Heart right ventricle (tissue), 16 donors: ENCODE measurements at regions of chr3 and their contacts with region 1.

Region 1: DNA sequence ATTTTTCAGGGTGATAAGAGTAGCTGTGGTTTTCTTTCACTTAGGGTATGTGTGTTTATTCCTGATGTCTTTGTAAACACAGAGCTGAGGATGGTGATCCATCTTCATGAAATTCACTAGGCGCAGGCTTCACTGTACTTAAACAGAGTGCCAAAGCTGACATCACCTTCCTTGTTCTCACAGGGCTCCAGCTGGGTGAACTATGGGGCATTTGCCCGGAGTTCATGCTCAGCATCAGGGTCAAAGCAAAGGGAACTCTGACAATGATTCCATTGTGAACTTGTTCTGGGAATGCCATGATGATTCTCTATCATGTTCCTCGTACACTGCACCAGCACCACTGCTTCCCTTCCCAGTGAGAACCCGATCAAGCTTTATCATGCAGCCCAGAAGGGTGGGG is 184.8 kb upstream of the P2RY1 start:
- DNase-seq: no peak
- ATAC-seq: peak in 3 of 8 donors; percentile 16 to 57 (median 55)
- H3K4me3 ChIP-seq: no peak overlapping the region
- H3K27ac ChIP-seq: no peak overlapping the region
- H3K4me1 ChIP-seq: peaks cover 0 to 7% (median 0%) of the 10 kb centered on the region in 9 donors
- H3K27me3 ChIP-seq: no peaks in the 10 kb centered on the region
- CTCF ChIP-seq: no peak

Region 2: DNA sequence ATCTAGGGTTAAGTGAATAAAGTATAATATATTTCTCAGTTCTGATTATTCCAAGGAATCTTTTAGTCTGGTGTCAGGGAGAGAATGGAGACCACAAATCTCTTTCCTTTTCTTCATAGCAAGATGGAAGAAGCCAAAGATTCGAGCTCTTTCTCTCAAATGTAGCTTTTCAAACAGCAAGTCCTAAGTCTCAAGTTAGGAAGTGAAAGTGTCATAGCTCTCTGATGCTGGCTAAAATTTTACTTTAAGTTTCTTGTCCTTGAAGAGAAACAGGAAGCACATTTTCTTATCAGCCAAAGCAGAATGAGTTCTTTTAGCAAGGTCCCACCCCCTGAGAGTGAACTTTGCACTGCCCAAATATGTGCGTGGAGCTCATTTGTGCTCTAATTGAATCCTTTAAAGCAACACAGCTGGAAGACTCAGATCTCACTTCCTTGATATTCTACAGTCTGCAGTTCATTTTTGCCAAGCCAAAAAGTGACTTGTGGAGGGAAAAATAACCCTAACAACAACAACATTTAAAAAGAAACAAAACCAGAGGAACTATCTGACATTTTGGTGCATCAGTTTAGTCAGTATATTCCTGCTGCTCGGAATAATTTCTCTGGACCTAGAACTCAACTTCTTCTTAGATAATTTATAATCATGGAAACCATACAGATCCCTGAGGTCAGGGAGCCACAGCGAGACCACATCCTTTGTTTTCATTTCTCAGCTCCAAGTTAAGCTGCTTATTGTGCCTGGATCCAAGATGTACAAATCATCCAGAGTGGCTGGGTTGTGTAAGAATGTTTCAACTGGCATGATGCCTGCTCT is 54.0 kb before region 1 on chr3:
- intact Hi-C with region 1: loop called in 1 of 10 experiments (anchors 2 kb)
- DNase-seq: peak in 1 of 2 donors; percentile 71
- ATAC-seq: peak; percentile 77 to 98 (median 96)
- H3K4me3 ChIP-seq: peak overlapping the region in 4 of 10 donors; percentile 0 to 31 (median 6)
- H3K27ac ChIP-seq: peak overlapping the region; percentile 46 to 91 (median 72)
- H3K4me1 ChIP-seq: peaks cover 0 to 33% (median 18%) of the 10 kb centered on the region in 9 donors
- H3K27me3 ChIP-seq: no peaks in the 10 kb centered on the region
- CTCF ChIP-seq: no peak